Right ventricle myocardium superior (tissue), 1 donor: ENCODE measurements at regions of chr2 and their contacts with region 1.

Region 1: DNA sequence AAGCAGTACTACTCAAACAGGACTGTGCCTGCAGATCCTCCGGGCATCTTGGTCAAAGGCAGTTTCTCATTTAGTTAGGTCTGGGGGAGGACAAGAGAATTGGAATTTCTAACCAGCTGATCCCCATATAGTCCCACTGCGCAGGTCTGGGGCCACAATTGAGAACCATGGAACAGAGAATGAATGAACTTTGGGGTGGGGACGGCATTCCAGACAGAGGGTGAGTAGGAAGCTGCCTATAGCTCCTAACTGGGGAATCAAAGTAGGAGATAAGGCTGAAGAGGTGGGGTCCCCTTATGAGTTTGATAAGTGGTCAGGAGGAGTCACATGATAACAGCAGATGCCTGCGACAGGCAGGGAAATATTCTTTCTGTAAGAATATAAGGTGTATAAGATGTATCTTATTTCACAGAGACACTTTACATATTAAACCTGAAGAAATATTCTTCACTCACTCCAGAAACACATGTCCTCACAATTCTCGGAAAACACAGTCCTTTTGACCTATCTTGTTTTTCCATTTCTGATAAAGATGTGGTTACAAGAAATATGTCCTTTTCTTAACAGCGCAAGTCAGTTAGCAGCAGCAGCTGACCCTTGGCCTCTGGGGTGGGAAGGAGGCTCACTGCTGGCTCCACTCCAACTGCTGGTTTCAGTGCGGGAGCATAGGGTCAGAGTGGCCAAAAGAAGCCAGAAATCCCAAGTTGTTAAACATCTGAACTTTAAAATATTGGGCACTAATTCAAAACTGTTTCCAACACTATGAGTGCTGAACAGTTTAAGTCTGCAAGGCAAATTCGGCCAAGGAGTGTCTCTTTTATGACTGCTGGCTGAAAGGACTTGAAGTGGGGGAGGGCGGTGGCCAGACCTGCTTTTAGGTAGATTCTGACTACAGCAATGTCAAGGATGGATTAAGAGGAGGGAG is 12.6 kb upstream of the TMEM214 start:
- DNase-seq: peak; percentile 82
- ATAC-seq: peak; percentile 43

Region 2: GRCh38 chr2:26922405-26923188 is 97.6 kb before region 1 on chr2:
- intact Hi-C with region 1: no loop called
- DNase-seq: peak; percentile 48
- ATAC-seq: peak; percentile 83

Region 3: DNA sequence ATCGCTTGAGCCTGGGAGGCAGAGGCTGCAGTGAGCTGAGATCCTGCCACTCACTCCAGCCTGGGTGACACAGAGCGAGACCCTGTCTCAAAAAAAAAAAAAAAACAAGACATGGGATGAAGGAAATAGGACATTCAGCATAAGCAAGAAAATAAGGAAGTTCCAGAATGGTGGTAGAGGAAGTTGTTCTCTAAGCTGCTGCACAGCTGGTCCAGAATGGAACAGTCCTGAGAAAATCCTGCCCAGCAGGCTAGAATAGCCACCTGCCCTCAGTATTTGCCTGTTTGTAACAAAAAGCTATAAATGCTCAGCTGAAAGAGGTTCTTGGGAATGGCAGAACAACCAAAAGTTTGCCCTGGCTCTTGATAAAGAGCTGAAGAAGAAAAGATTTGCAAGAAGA is 60.9 kb before region 1 on chr2:
- intact Hi-C with region 1: loop called (anchors 2 kb)
- DNase-seq: no peak
- ATAC-seq: no peak